ENCODE measurements at regions of chr3 and their contacts with region 1.

Region 1: GRCh38 chr3:48472915-48473616 is 26.5 kb downstream of the ATRIP start:
- DNase-seq: peak; percentile 89
- H3K4me3 ChIP-seq: peak overlapping the region; percentile 50 to 96 (median 76)
- H3K27ac ChIP-seq: peak overlapping the region; percentile 91
- H3K4me1 ChIP-seq: peaks cover 11% of the 10 kb centered on the region
- H3K27me3 ChIP-seq: no peaks in the 10 kb centered on the region
- CTCF ChIP-seq: peak in 1 of 2 donors; percentile 48

Region 2: GRCh38 chr3:48507351-48508061 is 34.4 kb after region 1 on chr3:
- CTCF ChIA-PET with region 1: no interaction called
- dilution Hi-C with region 1: no loop called
- in situ Hi-C with region 1: no loop called
- intact Hi-C with region 1: loop called (anchors 2 kb)
- DNase-seq: peak; percentile 92
- H3K4me3 ChIP-seq: no peak overlapping the region
- H3K27ac ChIP-seq: peak overlapping the region; percentile 58
- H3K4me1 ChIP-seq: peaks cover 39% of the 10 kb centered on the region
- H3K27me3 ChIP-seq: no peaks in the 10 kb centered on the region
- CTCF ChIP-seq: peak; percentile 56 to 69

Region 3: DNA sequence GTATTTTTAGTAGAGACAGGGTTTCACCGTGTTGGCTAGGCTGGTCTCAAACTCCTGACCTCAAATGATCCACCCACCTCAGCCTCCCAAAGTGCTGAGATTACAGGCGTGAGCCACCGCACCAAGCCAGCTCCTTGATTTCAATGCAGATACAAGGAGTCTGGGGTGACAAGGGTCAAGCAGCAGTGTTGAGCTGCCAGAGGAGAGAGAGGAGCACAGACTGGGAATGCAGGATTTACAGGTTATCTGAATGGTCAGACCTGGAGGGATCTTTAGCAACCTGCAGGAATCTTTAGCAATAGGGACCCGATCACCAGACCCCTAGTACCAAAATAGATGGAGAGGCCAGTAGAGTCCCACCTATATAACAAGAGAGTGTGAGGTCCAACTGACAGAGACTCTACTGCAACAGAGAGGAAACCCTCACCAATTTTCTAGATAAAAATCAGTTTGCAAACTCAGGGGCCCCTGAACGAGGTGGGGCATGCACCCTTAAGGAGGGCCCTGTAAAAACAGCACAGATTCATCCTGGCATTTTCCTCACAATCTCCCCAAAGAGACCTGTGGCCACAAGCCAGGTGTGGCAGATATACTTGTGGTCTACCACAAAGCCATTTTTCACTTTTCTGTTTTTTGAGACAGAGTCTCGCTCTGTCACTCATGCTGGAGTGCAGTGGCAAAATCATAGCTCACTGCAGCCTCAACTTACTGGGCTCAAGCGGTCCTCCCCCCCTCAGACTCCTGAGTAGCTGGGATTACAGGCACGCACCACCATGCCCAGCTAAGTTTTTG is 41.6 kb after region 1 on chr3:
- CTCF ChIA-PET with region 1: no interaction called
- dilution Hi-C with region 1: loop called (anchors 5 kb)
- in situ Hi-C with region 1: no loop called
- intact Hi-C with region 1: no loop called
- DNase-seq: no peak
- H3K4me3 ChIP-seq: no peak overlapping the region
- H3K27ac ChIP-seq: no peak overlapping the region
- H3K4me1 ChIP-seq: no peaks in the 10 kb centered on the region
- H3K27me3 ChIP-seq: no peaks in the 10 kb centered on the region
- CTCF ChIP-seq: no peak

Region 4: DNA sequence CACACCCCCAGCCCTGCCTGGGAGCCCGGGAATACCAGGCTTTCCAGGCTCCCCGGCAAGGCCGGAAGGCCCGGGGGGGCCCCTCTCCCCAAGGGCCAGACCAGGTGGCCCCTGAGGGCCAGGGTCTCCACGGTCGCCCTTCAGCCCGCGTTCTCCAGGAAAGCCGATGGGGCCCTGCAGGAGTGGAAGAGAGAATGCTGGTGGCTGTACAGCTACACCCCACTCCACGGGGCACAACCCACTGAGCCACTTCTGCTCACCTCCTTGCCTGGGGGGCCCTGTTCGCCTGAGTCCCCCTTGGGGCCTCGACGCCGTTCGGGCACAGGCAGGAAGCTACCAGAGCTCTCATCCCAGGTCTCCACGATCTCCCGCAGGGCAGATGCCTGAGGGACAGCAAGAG is 102.3 kb after region 1 on chr3:
- CTCF ChIA-PET with region 1: no interaction called
- dilution Hi-C with region 1: loop called (anchors 5 kb)
- in situ Hi-C with region 1: no loop called
- intact Hi-C with region 1: no loop called
- DNase-seq: no peak
- H3K4me3 ChIP-seq: no peak overlapping the region
- H3K27ac ChIP-seq: no peak overlapping the region
- H3K4me1 ChIP-seq: no peaks in the 10 kb centered on the region
- H3K27me3 ChIP-seq: no peaks in the 10 kb centered on the region
- CTCF ChIP-seq: no peak

Region 5: GRCh38 chr3:48663415-48664312 is 190.6 kb after region 1 on chr3:
- CTCF ChIA-PET with region 1: no interaction called
- dilution Hi-C with region 1: no loop called
- in situ Hi-C with region 1: loop called in 1 of 2 experiments (anchors 25 kb)
- intact Hi-C with region 1: no loop called
- DNase-seq: peak; percentile 99
- H3K4me3 ChIP-seq: peak overlapping the region; percentile 58 to 60 (median 59)
- H3K27ac ChIP-seq: peak overlapping the region; percentile 87
- H3K4me1 ChIP-seq: peaks cover 21% of the 10 kb centered on the region
- H3K27me3 ChIP-seq: no peaks in the 10 kb centered on the region
- CTCF ChIP-seq: peak; percentile 72 to 84

Measured in mammary epithelial cell (primary cell).